GM12878 (cell line): ENCODE measurements at regions of chr18 and their contacts with region 1.

Region 1: DNA sequence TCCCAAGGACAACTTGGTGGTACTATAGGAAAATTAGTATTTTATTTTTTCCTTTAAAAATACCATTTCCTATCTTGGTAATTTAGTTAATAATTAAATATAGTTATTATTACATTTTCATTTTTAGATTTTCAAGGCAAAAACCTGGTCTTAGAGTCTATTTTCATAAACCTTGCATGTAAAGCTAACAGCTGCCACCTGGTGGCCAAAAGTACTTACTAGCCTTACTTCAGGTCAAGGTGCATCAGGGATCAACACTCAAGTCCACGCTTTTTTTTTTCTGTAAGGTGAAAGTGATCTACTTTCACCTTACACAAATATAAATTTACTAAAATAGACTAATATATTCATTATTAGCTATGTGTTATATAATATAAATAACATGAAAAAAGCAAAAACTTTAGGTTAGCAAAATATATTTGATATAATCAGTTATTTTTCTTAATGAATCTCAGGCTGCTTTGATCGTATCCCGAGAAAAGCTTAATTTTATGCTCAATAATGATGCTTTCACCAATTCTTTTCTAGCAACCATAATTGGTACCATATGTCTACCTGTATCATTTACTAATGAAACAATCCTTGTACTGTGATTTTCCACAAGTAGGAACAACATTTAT is 62.5 kb downstream of the RELCH start:
- DNase-seq: peak; percentile 35
- ATAC-seq: peak; percentile 86
- H3K4me3 ChIP-seq: no peak overlapping the region
- H3K27ac ChIP-seq: no peak overlapping the region
- H3K4me1 ChIP-seq: no peaks in the 10 kb centered on the region
- H3K27me3 ChIP-seq: no peaks in the 10 kb centered on the region
- CTCF ChIP-seq: peak; percentile 65 to 74 (median 72)
- EP300 ChIP-seq: no peak
- POLR2A ChIP-seq: no peak
- RAD21 ChIP-seq: peak; percentile 88

Region 2: GRCh38 chr18:62054929-62055498 is 194.6 kb before region 1 on chr18:
- CTCF ChIA-PET with region 1: no interaction called
- POLR2A ChIA-PET with region 1: no interaction called
- RAD21 ChIA-PET with region 1: no interaction called
- SMC1A ChIA-PET with region 1: no interaction called
- in situ Hi-C with region 1: no loop called
- intact Hi-C with region 1: no loop called
- DNase-seq: no peak
- ATAC-seq: no peak
- H3K4me3 ChIP-seq: no peak overlapping the region
- H3K27ac ChIP-seq: no peak overlapping the region
- H3K4me1 ChIP-seq: no peaks in the 10 kb centered on the region
- H3K27me3 ChIP-seq: no peaks in the 10 kb centered on the region
- CTCF ChIP-seq: no peak
- EP300 ChIP-seq: no peak
- POLR2A ChIP-seq: no peak
- RAD21 ChIP-seq: no peak

Region 3: GRCh38 chr18:62175521-62175920 is 74.1 kb before region 1 on chr18:
- CTCF ChIA-PET with region 1: interaction called, 268 read pairs
- POLR2A ChIA-PET with region 1: no interaction called
- RAD21 ChIA-PET with region 1: interaction called, 98 read pairs
- SMC1A ChIA-PET with region 1: interaction called, 102 read pairs
- in situ Hi-C with region 1: no loop called
- intact Hi-C with region 1: no loop called
- DNase-seq: no peak
- ATAC-seq: no peak; the same call in 2 of the 3 replicates
- H3K4me3 ChIP-seq: no peak overlapping the region
- H3K27ac ChIP-seq: no peak overlapping the region
- H3K4me1 ChIP-seq: no peaks in the 10 kb centered on the region
- H3K27me3 ChIP-seq: no peaks in the 10 kb centered on the region
- CTCF ChIP-seq: no peak
- EP300 ChIP-seq: no peak
- POLR2A ChIP-seq: no peak
- RAD21 ChIP-seq: no peak

Region 4: DNA sequence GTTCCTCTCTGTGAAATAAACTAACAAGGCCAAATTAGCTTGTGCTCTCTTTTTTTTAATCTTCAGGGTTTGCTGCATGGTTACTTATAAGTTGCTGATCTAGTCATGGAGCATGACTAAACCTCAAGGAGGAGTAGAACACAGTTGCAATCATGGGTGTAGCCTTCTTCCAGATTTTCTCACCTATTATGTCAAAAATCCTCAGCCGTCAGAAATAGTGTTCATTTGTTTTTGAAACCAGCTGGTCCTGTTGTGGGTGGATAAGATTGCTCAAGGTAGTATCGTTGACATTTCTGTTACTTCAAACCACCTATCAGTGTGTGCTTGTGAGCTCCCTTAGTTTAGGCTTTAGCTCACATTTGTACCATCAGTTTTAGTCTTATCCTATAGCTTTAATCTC is 51.3 kb before region 1 on chr18:
- CTCF ChIA-PET with region 1: interaction called, 46 read pairs
- POLR2A ChIA-PET with region 1: no interaction called
- RAD21 ChIA-PET with region 1: interaction called, 8 read pairs
- SMC1A ChIA-PET with region 1: interaction called, 20 read pairs
- in situ Hi-C with region 1: no loop called
- intact Hi-C with region 1: no loop called
- DNase-seq: no peak
- ATAC-seq: peak; percentile 59
- H3K4me3 ChIP-seq: no peak overlapping the region
- H3K27ac ChIP-seq: no peak overlapping the region
- H3K4me1 ChIP-seq: no peaks in the 10 kb centered on the region
- H3K27me3 ChIP-seq: no peaks in the 10 kb centered on the region
- CTCF ChIP-seq: no peak
- EP300 ChIP-seq: no peak
- POLR2A ChIP-seq: no peak
- RAD21 ChIP-seq: no peak

Region 5: DNA sequence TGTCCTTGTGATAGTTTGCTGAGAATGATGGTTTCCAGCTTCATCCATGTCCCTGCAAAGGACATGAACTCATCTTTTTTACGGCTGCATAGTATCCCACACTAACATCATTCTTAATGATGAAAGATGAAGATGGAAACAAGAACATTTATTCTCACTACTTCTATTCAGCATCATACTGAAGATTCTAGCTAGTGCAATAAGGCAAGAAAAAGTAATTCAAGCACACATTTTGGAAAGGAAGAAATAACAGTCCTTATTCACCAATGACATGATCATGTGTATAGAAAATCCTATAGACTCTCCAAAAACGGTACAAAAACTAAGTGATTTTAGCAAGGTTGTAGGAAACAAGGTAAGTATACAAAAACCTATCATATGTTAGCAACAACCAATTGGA is 25.4 kb before region 1 on chr18:
- CTCF ChIA-PET with region 1: interaction called, 38 read pairs
- POLR2A ChIA-PET with region 1: no interaction called
- RAD21 ChIA-PET with region 1: interaction called, 3 read pairs
- SMC1A ChIA-PET with region 1: interaction called, 14 read pairs
- in situ Hi-C with region 1: no loop called
- intact Hi-C with region 1: no loop called
- DNase-seq: no peak
- ATAC-seq: no peak
- H3K4me3 ChIP-seq: no peak overlapping the region
- H3K27ac ChIP-seq: no peak overlapping the region
- H3K4me1 ChIP-seq: no peaks in the 10 kb centered on the region
- H3K27me3 ChIP-seq: no peaks in the 10 kb centered on the region
- CTCF ChIP-seq: no peak
- EP300 ChIP-seq: no peak
- POLR2A ChIP-seq: no peak
- RAD21 ChIP-seq: no peak

Region 6: DNA sequence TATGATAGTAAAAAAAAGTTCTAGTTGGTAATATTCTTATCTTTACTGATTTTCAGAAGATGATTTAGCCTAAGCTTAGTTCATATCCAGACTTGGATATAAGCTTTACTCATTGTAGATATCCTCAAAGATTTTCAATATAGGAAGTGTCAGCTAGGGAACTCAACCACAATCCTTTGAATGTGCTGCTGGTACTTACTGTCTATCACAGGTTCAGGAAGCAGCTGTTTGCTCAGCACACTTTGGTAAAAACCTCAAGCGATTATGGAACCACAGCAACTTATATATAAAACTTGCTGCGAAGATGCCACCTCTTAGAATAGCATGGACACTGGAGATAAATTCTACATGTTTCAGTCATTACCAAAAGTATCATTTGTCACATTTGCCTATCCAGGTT is 15.4 kb after region 1 on chr18:
- CTCF ChIA-PET with region 1: interaction called, 39 read pairs
- POLR2A ChIA-PET with region 1: interaction called, 4 read pairs
- RAD21 ChIA-PET with region 1: interaction called, 6 read pairs
- SMC1A ChIA-PET with region 1: interaction called, 14 read pairs
- in situ Hi-C with region 1: no loop called
- intact Hi-C with region 1: no loop called
- DNase-seq: no peak
- ATAC-seq: no peak
- H3K4me3 ChIP-seq: no peak overlapping the region
- H3K27ac ChIP-seq: no peak overlapping the region
- H3K4me1 ChIP-seq: no peaks in the 10 kb centered on the region
- H3K27me3 ChIP-seq: no peaks in the 10 kb centered on the region
- CTCF ChIP-seq: no peak
- EP300 ChIP-seq: no peak
- POLR2A ChIP-seq: no peak
- RAD21 ChIP-seq: no peak